ENCODE measurements at regions of chr7 and their contacts with region 1.

Region 1: DNA sequence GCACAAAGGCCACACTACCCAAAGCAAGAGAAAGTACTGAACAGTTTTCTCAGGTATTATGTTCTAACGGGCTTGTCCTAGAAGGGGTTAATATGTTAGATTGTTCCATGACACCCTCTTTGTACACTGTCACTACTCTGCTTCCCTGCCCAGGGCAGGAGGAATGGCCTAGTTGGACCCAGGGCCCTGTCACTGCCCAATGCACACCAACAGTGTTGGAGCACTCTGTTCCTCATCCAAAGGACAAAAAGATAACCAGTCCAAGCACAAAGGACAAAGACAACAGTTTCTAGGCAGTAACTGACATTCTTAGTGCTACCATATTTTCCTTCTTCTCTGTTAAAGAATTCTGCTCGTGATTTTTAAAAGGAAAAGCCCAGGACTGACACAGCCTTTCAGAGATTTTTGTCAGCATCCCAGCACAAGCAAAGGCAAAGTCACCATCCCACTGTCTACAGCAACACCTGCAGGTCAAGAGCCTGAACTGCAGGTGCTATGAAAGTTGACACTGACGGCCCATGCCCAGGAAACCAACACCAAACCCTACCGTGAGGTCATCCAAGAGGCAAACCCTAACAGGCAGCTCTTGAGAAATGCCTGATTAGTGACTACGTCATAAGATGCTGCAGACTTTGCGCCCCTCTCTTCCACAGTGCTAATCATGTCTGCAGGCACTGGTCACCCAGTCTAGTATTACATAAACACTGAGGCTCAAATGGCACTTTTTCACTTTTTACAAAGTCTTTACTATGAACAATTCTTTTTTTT is 13.2 kb downstream of the NUDCD3 start:
- DNase-seq: peak; percentile 46
- ATAC-seq: peak; percentile 97
- H3K4me3 ChIP-seq: no peak overlapping the region
- H3K27ac ChIP-seq: no peak overlapping the region
- H3K4me1 ChIP-seq: no peaks in the 10 kb centered on the region
- H3K27me3 ChIP-seq: no peaks in the 10 kb centered on the region
- CTCF ChIP-seq: peak; percentile 96 to 98 (median 98); a peak in 5 of 6 replicates
- EP300 ChIP-seq: no peak
- POLR2A ChIP-seq: no peak
- RAD21 ChIP-seq: peak; percentile 98

Region 2: GRCh38 chr7:44348300-44348699 is 128.9 kb before region 1 on chr7:
- CTCF ChIA-PET with region 1: interaction called, 3 read pairs
- POLR2A ChIA-PET with region 1: no interaction called
- RAD21 ChIA-PET with region 1: no interaction called
- SMC1A ChIA-PET with region 1: interaction called, 3 read pairs
- in situ Hi-C with region 1: no loop called
- intact Hi-C with region 1: loop called (anchors 2 kb)
- DNase-seq: no peak
- ATAC-seq: peak; percentile 84
- H3K4me3 ChIP-seq: no peak overlapping the region
- H3K27ac ChIP-seq: no peak overlapping the region
- H3K4me1 ChIP-seq: no peaks in the 10 kb centered on the region
- H3K27me3 ChIP-seq: no peaks in the 10 kb centered on the region
- CTCF ChIP-seq: peak; percentile 42 to 54 (median 52)
- EP300 ChIP-seq: no peak
- POLR2A ChIP-seq: no peak
- RAD21 ChIP-seq: peak; percentile 60

Region 3: DNA sequence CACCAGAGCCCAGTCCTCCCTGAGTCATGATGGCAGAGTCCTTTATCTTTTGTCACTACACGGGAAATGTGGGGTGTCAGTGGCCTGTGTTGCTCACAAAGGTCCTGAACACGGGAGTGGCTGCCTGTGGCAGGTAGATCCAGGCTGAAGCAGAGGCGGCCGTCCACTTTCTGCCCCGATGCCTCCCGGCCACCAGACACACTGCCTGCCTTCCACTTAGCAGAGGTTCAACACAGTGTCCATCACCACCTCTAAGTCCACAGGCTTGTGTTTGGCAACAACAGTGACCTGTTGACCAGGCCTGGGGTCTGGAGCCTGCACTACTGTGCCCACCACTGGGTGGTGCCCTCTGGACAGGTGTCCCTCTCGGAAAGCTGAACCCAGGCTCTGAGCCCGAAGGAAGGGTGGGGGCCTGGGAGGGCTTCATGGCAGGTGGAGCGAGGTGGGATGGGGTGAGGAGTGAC is 102.0 kb before region 1 on chr7:
- CTCF ChIA-PET with region 1: interaction called, 4 read pairs
- POLR2A ChIA-PET with region 1: no interaction called
- RAD21 ChIA-PET with region 1: no interaction called
- SMC1A ChIA-PET with region 1: interaction called, 3 read pairs
- in situ Hi-C with region 1: no loop called
- intact Hi-C with region 1: loop called (anchors 5 kb)
- DNase-seq: no peak
- ATAC-seq: peak; percentile 41
- H3K4me3 ChIP-seq: no peak overlapping the region
- H3K27ac ChIP-seq: no peak overlapping the region
- H3K4me1 ChIP-seq: peaks cover 14% of the 10 kb centered on the region
- H3K27me3 ChIP-seq: no peaks in the 10 kb centered on the region
- CTCF ChIP-seq: peak; percentile 13 to 38 (median 26); a peak in 2 of 6 replicates
- EP300 ChIP-seq: no peak
- POLR2A ChIP-seq: no peak
- RAD21 ChIP-seq: peak; percentile 33; the same call in 1 of the 2 replicates

Region 4: DNA sequence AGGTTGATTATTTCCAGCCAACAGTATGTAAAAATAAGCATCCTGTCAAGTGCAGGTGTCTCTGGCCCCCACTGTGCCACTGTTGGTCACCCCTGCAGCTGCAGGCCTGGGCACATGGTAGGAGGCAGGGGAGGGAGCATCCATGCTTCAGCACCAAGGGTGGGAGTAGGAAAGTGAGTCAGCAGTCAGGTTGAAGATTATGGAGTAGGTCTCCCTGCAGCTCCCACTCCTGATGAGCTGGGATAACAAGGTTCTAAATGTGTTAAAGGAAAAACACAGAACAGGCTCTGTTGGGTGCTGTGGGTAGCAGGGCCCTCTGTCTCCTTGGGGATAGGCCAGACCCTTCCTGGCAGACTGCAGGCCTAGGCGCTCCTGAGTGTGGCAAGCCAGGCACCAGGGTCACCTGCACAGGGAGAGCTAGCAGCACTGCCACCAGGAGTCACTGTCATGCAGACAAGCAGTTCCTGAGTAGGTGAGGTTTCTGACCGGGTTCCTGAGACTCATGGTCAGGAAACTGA is 46.1 kb before region 1 on chr7:
- CTCF ChIA-PET with region 1: interaction called, 3 read pairs
- POLR2A ChIA-PET with region 1: interaction called, 3 read pairs
- RAD21 ChIA-PET with region 1: interaction called, 4 read pairs
- SMC1A ChIA-PET with region 1: interaction called, 16 read pairs
- in situ Hi-C with region 1: no loop called
- intact Hi-C with region 1: loop called (anchors 2 kb)
- DNase-seq: no peak
- ATAC-seq: peak; percentile 91
- H3K4me3 ChIP-seq: no peak overlapping the region
- H3K27ac ChIP-seq: no peak overlapping the region
- H3K4me1 ChIP-seq: peaks cover 6% of the 10 kb centered on the region
- H3K27me3 ChIP-seq: no peaks in the 10 kb centered on the region
- CTCF ChIP-seq: peak; percentile 51 to 56 (median 55)
- EP300 ChIP-seq: no peak
- POLR2A ChIP-seq: no peak
- RAD21 ChIP-seq: peak; percentile 68

Region 5: GRCh38 chr7:44460325-44460724 is 16.9 kb before region 1 on chr7:
- CTCF ChIA-PET with region 1: interaction called, 11 read pairs
- POLR2A ChIA-PET with region 1: interaction called, 4 read pairs
- RAD21 ChIA-PET with region 1: interaction called, 7 read pairs
- SMC1A ChIA-PET with region 1: interaction called, 26 read pairs
- in situ Hi-C with region 1: no loop called
- intact Hi-C with region 1: no loop called
- DNase-seq: peak; percentile 93
- ATAC-seq: peak; percentile 99
- H3K4me3 ChIP-seq: peak overlapping the region; percentile 33; the same call in 1 of the 2 replicates
- H3K27ac ChIP-seq: peak overlapping the region; percentile 79
- H3K4me1 ChIP-seq: peaks cover 22% of the 10 kb centered on the region
- H3K27me3 ChIP-seq: no peaks in the 10 kb centered on the region
- CTCF ChIP-seq: no peak
- EP300 ChIP-seq: peak; percentile 76 to 95
- POLR2A ChIP-seq: no peak
- RAD21 ChIP-seq: no peak

Region 6: GRCh38 chr7:44466300-44467216 is 10.7 kb before region 1 on chr7:
- CTCF ChIA-PET with region 1: interaction called, 11 read pairs
- POLR2A ChIA-PET with region 1: no interaction called
- RAD21 ChIA-PET with region 1: interaction called, 7 read pairs
- SMC1A ChIA-PET with region 1: interaction called, 26 read pairs
- in situ Hi-C with region 1: no loop called
- intact Hi-C with region 1: no loop called
- DNase-seq: no peak
- ATAC-seq: no peak
- H3K4me3 ChIP-seq: no peak overlapping the region
- H3K27ac ChIP-seq: no peak overlapping the region
- H3K4me1 ChIP-seq: peaks cover 7% of the 10 kb centered on the region
- H3K27me3 ChIP-seq: no peaks in the 10 kb centered on the region
- CTCF ChIP-seq: no peak
- EP300 ChIP-seq: no peak
- POLR2A ChIP-seq: no peak
- RAD21 ChIP-seq: no peak

Region 7: GRCh38 chr7:44867073-44867995 is 390.1 kb after region 1 on chr7:
- CTCF ChIA-PET with region 1: no interaction called
- POLR2A ChIA-PET with region 1: no interaction called
- RAD21 ChIA-PET with region 1: no interaction called
- SMC1A ChIA-PET with region 1: no interaction called
- in situ Hi-C with region 1: no loop called
- intact Hi-C with region 1: no loop called
- DNase-seq: no peak
- ATAC-seq: 0 out of 3 replicates have a peak, but pooled peaks have one; percentile 18
- H3K4me3 ChIP-seq: no peak overlapping the region
- H3K27ac ChIP-seq: no peak overlapping the region
- H3K4me1 ChIP-seq: no peaks in the 10 kb centered on the region
- H3K27me3 ChIP-seq: no peaks in the 10 kb centered on the region; a peak in 1 of 4 replicates
- CTCF ChIP-seq: no peak
- EP300 ChIP-seq: no peak
- POLR2A ChIP-seq: no peak
- RAD21 ChIP-seq: no peak